ENCODE measurements at regions of chr17 and their contacts with region 1.

Region 1: DNA sequence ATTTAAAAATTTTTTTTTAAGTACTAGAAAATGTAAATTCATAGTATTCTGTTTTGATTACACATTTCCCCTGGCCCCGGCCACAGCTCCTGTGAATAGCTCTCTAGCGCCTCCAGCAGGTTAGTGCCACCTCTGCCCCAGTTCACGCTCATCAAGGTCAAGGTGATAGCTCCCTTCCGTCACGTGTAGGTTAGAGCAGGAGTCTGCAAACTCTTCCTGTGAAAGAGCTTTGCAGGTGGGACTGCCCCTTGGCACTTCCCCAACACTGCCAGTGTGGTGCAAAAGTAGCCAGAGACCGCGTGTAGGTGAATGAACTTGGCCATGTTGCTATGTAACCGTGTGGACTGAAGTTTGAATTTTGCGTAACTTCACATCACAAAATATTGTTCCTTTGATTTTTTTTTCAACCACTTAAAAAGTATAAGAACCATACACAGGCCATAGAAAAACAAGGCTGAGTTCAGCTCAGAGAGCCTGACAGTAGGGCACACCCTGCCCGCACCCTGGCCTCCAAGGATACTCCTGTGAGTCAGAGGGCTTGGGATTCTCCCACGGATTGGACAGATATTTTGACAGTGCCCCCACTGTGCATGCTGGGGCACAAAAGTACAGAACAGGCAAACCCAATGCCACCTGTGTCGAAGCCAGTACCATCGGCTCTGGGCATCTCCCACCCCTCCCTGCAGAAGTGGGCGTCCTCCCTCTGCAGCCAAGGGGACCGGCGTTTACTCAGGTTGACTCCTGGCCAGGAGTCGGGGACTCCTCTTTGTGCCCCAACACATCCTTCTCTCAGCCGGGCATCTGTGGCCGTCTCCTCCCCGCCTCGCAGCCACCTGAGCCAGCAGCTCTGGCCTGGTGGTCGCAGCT is 92.0 kb upstream of the CHMP6 start:
- DNase-seq: peak; percentile 85
- ATAC-seq: peak; percentile 88
- H3K4me3 Mint-ChIP-seq: no peak overlapping the region
- H3K27ac Mint-ChIP-seq: no peak overlapping the region
- H3K4me1 Mint-ChIP-seq: no peaks in the 10 kb centered on the region
- H3K27me3 Mint-ChIP-seq: no peaks in the 10 kb centered on the region
- CTCF ChIP-seq: peak; percentile 86; the same call in 1 of the 2 replicates

Region 2: DNA sequence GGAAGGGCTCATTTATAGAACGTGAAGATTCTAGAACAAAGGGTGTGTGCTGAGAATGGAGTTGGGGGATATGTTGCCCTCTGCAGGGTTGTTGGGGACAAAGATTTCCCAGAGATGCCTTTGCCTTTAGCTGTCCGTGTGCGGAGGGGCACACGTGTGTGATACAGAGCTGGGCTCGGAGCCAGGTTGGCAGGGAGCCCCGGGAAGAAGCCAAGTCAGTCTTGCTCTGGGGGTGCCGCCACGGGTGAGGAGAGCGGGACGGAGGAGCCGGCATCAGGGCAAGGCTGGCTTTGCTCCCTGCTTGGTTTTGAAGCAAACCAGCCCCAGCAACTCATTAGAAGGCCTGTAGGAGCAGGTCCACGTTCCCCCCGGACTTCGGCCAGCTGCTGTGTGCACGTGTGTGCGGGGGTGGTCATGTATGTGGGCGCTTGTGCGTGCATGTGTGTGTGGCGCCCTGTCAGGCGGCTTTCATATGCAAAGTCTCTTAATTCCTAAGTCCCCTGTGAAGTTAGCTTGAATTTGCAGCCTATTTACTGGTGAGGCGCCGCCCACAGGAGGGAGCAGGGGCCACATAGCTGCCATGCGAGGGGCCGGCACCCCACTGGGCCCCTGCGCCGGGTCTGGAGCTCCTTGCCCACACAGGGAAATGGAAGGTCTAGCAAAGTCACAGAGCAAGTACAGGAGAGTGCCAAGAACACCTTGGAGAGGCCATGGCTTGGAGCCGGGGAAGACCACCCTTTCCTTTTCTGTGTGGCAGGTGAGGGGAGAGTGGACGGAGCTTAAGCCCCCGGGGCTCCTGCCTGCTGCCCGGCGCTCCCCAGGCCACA is 40.1 kb before region 1 on chr17:
- CTCF ChIA-PET with region 1: interaction called, 12 read pairs
- POLR2A ChIA-PET with region 1: no interaction called
- DNase-seq: no peak
- ATAC-seq: peak; percentile 27
- H3K4me3 Mint-ChIP-seq: no peak overlapping the region; the same call in 1 of the 2 replicates
- H3K27ac Mint-ChIP-seq: peak overlapping the region; percentile 95
- H3K4me1 Mint-ChIP-seq: peaks cover 28% of the 10 kb centered on the region
- H3K27me3 Mint-ChIP-seq: no peaks in the 10 kb centered on the region
- CTCF ChIP-seq: no peak

Region 3: GRCh38 chr17:80873284-80873951 is 26.2 kb before region 1 on chr17:
- CTCF ChIA-PET with region 1: interaction called, 28 read pairs
- POLR2A ChIA-PET with region 1: no interaction called
- DNase-seq: peak; percentile 68
- ATAC-seq: peak; percentile 91
- H3K4me3 Mint-ChIP-seq: peak overlapping the region; percentile 14; the same call in 1 of the 2 replicates
- H3K27ac Mint-ChIP-seq: peak overlapping the region; percentile 95
- H3K4me1 Mint-ChIP-seq: peaks cover 32% of the 10 kb centered on the region
- H3K27me3 Mint-ChIP-seq: no peaks in the 10 kb centered on the region
- CTCF ChIP-seq: no peak

Region 4: DNA sequence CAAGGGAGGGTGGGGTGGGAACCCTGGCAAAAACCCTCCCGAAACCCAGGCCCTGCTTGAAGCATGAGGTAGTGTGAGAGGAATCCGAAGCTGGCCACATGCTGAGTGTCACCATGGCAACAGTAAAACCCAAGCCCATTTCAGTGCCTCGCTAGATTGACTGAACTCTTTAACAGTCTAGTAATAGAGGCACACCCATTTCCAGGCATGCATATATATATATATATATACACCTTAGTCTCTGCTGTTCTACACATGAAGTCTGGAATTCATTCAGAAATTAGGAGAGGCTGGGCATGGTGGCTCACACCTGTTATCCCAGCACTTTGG is 32.3 kb after region 1 on chr17:
- CTCF ChIA-PET with region 1: interaction called, 19 read pairs
- POLR2A ChIA-PET with region 1: no interaction called
- DNase-seq: peak; percentile 73
- ATAC-seq: peak; percentile 72
- H3K4me3 Mint-ChIP-seq: no peak overlapping the region
- H3K27ac Mint-ChIP-seq: no peak overlapping the region
- H3K4me1 Mint-ChIP-seq: peaks cover 10% of the 10 kb centered on the region
- H3K27me3 Mint-ChIP-seq: peaks cover 35% of the 10 kb centered on the region
- CTCF ChIP-seq: no peak